ENCODE measurements at regions of chr5 and their contacts with region 1.

Region 1: GRCh38 chr5:177317959-177318377 is 6.3 kb upstream of the MXD3 start:
- DNase-seq: peak; percentile 87
- ATAC-seq: peak; percentile 76
- H3K4me3 Mint-ChIP-seq: no peak overlapping the region
- H3K27ac Mint-ChIP-seq: no peak overlapping the region
- H3K4me1 Mint-ChIP-seq: peaks cover 48% of the 10 kb centered on the region
- H3K27me3 Mint-ChIP-seq: no peaks in the 10 kb centered on the region

Region 2: GRCh38 chr5:177194274-177194673 is 123.7 kb before region 1 on chr5:
- CTCF ChIA-PET with region 1: no interaction called
- DNase-seq: no peak
- ATAC-seq: no peak
- H3K4me3 Mint-ChIP-seq: no peak overlapping the region
- H3K27ac Mint-ChIP-seq: no peak overlapping the region
- H3K4me1 Mint-ChIP-seq: peaks cover 10% of the 10 kb centered on the region
- H3K27me3 Mint-ChIP-seq: no peaks in the 10 kb centered on the region

Region 3: GRCh38 chr5:177276886-177277285 is 41.1 kb before region 1 on chr5:
- CTCF ChIA-PET with region 1: no interaction called
- DNase-seq: no peak
- ATAC-seq: no peak
- H3K4me3 Mint-ChIP-seq: no peak overlapping the region
- H3K27ac Mint-ChIP-seq: peak overlapping the region; percentile 67
- H3K4me1 Mint-ChIP-seq: peaks cover 10% of the 10 kb centered on the region
- H3K27me3 Mint-ChIP-seq: no peaks in the 10 kb centered on the region

Region 4: GRCh38 chr5:177351385-177352329 is 33.7 kb after region 1 on chr5 and contains the start of gene LMAN2:
- CTCF ChIA-PET with region 1: interaction called, 28 read pairs
- DNase-seq: peak; percentile 96
- ATAC-seq: peak; percentile 99
- H3K4me3 Mint-ChIP-seq: peak within 1 kb of the TSS; percentile 98
- H3K27ac Mint-ChIP-seq: peak within 1 kb of the TSS; percentile 100
- H3K4me1 Mint-ChIP-seq: peaks cover 65% of the 10 kb centered on the region
- H3K27me3 Mint-ChIP-seq: no peaks in the 10 kb centered on the region
- total RNA-seq, gene LMAN2: 133 to 140 TPM

Region 5: GRCh38 chr5:177357459-177358351 is 39.7 kb after region 1 on chr5 and contains the start of gene RGS14:
- CTCF ChIA-PET with region 1: interaction called, 11 read pairs
- DNase-seq: peak; percentile 82
- ATAC-seq: peak; percentile 94
- H3K4me3 Mint-ChIP-seq: peak within 1 kb of the TSS; percentile 92
- H3K27ac Mint-ChIP-seq: peak within 1 kb of the TSS; percentile 86
- H3K4me1 Mint-ChIP-seq: peaks cover 71% of the 10 kb centered on the region
- H3K27me3 Mint-ChIP-seq: no peaks in the 10 kb centered on the region
- total RNA-seq, gene RGS14: 52.3 to 93.0 TPM

Region 6: GRCh38 chr5:177370488-177371119 is 52.6 kb after region 1 on chr5:
- CTCF ChIA-PET with region 1: interaction called, 57 read pairs
- DNase-seq: peak; percentile 77
- ATAC-seq: peak; percentile 83
- H3K4me3 Mint-ChIP-seq: peak overlapping the region; percentile 53
- H3K27ac Mint-ChIP-seq: no peak overlapping the region
- H3K4me1 Mint-ChIP-seq: peaks cover 56% of the 10 kb centered on the region
- H3K27me3 Mint-ChIP-seq: no peaks in the 10 kb centered on the region

Region 7: GRCh38 chr5:177516604-177517568 is 198.9 kb after region 1 on chr5 and contains the start of gene DDX41:
- CTCF ChIA-PET with region 1: no interaction called
- DNase-seq: peak; percentile 98
- ATAC-seq: peak; percentile 92
- H3K4me3 Mint-ChIP-seq: peak within 1 kb of the TSS; percentile 93
- H3K27ac Mint-ChIP-seq: peak within 1 kb of the TSS; percentile 85
- H3K4me1 Mint-ChIP-seq: peaks cover 55% of the 10 kb centered on the region
- H3K27me3 Mint-ChIP-seq: no peaks in the 10 kb centered on the region
- total RNA-seq, gene DDX41: 126 to 130 TPM